Activated CD4-positive, alpha-beta memory T cell treated with anti-CD3 and anti-CD28 coated beads for 36 hours (primary cell): ENCODE measurements at regions of chr3 and their contacts with region 1.

Region 1: DNA sequence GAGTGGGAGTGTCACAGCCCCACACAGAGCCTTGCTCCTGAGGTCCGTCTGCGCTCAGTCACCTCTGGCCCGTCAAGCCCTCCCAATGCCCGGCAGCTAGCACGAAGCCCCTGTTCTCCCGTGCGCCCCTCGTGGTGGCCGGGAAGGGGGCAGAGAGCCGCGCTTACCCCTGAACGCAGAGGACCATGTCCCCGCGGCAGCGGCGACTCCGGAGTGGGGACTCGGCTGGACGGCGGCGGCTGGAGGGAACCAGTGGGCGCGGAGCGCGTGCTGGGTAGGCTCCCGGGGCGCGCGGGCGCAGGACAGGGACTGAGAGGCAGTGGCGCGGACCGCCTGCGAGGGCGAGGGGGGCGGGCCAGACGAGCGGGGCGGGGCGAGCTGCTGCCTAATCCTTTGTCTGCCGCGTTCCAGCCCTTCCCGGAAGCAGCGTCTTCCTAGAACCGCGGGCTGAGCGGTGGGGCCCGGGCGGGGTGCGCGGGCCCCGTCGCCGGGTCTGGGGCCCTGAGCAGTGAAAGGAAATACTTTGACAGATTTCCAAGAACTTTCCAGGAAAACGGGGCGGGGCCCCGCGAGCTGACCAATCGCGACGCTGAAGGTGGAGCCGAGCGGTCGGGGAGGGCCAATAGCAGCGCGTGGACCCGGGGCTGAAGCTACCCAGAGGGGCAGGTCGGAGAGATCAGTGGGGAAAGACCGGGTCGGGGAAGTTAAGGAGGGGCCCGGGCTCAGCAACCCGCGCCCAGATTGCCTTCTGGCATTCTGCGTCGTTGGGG is at the start of gene CISH:
- DNase-seq: peak; percentile 99
- H3K4me3 Mint-ChIP-seq: peak within 1 kb of the TSS; percentile 98
- H3K27ac Mint-ChIP-seq: peak within 1 kb of the TSS; percentile 100
- H3K4me1 Mint-ChIP-seq: peaks cover 39% of the 10 kb centered on the region
- H3K27me3 Mint-ChIP-seq: peaks cover 6% of the 10 kb centered on the region
- total RNA-seq, gene CISH: 319 TPM

Region 2: GRCh38 chr3:50436114-50436674 is 175.5 kb before region 1 on chr3:
- CTCF ChIA-PET with region 1: interaction called, 5 read pairs
- POLR2A ChIA-PET with region 1: no interaction called
- intact Hi-C with region 1: loop called (anchors 2 kb)
- DNase-seq: peak; percentile 85
- H3K4me3 Mint-ChIP-seq: no peak overlapping the region
- H3K27ac Mint-ChIP-seq: no peak overlapping the region
- H3K4me1 Mint-ChIP-seq: no peaks in the 10 kb centered on the region
- H3K27me3 Mint-ChIP-seq: peaks cover 3% of the 10 kb centered on the region

Region 3: GRCh38 chr3:50487181-50487580 is 124.5 kb before region 1 on chr3:
- CTCF ChIA-PET with region 1: no interaction called
- POLR2A ChIA-PET with region 1: no interaction called
- intact Hi-C with region 1: no loop called
- DNase-seq: no peak
- H3K4me3 Mint-ChIP-seq: no peak overlapping the region
- H3K27ac Mint-ChIP-seq: no peak overlapping the region
- H3K4me1 Mint-ChIP-seq: peaks cover 8% of the 10 kb centered on the region
- H3K27me3 Mint-ChIP-seq: no peaks in the 10 kb centered on the region

Region 4: DNA sequence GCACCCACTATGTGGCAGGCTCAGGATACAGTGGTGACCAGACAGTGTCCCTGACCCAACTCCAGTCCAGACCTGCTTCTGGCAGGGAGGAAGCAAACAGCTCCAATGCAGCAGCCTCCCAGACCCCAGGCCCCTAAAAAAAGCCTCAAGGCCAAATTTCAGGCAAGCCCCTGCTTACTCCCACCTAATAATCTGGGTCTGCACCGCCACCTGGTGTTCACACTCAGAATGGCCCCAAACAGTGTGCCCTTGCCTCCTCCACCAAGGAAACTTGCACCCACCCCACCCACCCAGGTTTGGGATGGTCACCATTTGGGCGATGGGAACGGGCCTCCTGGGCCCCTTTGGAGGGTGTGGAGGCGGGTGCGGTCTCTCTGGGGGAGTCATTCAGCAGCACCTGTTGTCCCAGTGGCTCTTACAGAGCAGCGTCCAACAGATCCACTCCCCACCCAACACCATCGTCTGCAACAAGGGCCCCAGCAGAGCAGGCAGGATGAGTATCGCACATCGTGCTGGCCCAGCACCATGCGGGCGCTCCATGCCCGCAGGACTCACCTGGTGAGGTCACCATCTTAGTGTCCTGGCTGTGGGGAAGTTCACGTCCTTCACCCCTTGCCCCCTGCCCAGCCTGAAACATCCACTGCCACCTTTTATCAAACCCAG is 61.4 kb before region 1 on chr3:
- CTCF ChIA-PET with region 1: interaction called, 17 read pairs
- POLR2A ChIA-PET with region 1: no interaction called
- intact Hi-C with region 1: no loop called
- DNase-seq: peak; percentile 79
- H3K4me3 Mint-ChIP-seq: no peak overlapping the region
- H3K27ac Mint-ChIP-seq: no peak overlapping the region
- H3K4me1 Mint-ChIP-seq: no peaks in the 10 kb centered on the region
- H3K27me3 Mint-ChIP-seq: no peaks in the 10 kb centered on the region

Region 5: DNA sequence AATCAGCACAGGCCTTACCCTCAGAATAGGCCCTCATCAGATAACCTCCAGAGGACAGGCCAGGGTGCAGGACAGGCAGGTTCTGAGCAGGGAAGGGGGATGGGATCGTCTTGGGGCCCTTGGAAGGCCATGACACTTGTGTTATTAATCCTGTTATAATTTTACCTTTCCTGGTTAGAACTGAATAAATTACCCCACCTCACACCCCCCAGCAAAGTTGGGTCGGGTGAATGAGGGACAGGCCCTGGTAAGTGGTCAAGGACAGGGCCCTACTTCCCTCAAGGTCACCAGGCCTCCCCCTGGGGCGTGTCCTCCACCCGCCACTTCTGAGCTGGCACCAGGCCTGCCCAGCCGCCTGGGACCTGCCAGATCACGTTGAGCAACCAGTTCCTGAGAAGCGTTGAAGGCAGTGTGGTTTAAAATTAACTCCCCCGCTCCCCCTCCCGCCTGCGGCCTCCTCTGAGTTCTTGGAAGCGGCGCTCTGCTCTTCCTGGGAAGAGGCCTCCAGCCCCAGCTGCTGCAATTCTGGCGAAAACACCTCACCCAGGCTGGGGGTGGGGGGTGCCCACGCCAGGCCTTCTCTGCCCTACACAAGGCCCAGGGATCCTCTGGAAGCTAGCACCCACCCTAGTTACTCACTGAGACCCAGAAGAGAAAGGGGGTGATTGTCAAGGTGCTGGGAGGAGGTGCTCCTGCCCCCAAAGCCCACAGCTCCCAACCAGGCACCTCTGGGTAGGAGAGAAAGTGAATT is 10.6 kb before region 1 on chr3:
- CTCF ChIA-PET with region 1: interaction called, 163 read pairs
- POLR2A ChIA-PET with region 1: interaction called, 283 read pairs
- intact Hi-C with region 1: loop called (anchors 1 kb)
- DNase-seq: peak; percentile 98
- H3K4me3 Mint-ChIP-seq: peak overlapping the region; percentile 98
- H3K27ac Mint-ChIP-seq: peak overlapping the region; percentile 100
- H3K4me1 Mint-ChIP-seq: peaks cover 81% of the 10 kb centered on the region
- H3K27me3 Mint-ChIP-seq: no peaks in the 10 kb centered on the region

Region 6: GRCh38 chr3:50666837-50667236 is 55.2 kb after region 1 on chr3:
- CTCF ChIA-PET with region 1: interaction called, 10 read pairs
- POLR2A ChIA-PET with region 1: no interaction called
- intact Hi-C with region 1: no loop called
- DNase-seq: no peak
- H3K4me3 Mint-ChIP-seq: no peak overlapping the region
- H3K27ac Mint-ChIP-seq: no peak overlapping the region
- H3K4me1 Mint-ChIP-seq: peaks cover 12% of the 10 kb centered on the region
- H3K27me3 Mint-ChIP-seq: no peaks in the 10 kb centered on the region

Region 7: GRCh38 chr3:51384726-51385473 is 773.3 kb after region 1 on chr3 and contains the start of gene MANF:
- CTCF ChIA-PET with region 1: interaction called, 19 read pairs
- POLR2A ChIA-PET with region 1: interaction called, 4 read pairs
- intact Hi-C with region 1: loop called (anchors 2 kb)
- DNase-seq: peak; percentile 99
- H3K4me3 Mint-ChIP-seq: peak within 1 kb of the TSS; percentile 93
- H3K27ac Mint-ChIP-seq: peak within 1 kb of the TSS; percentile 98
- H3K4me1 Mint-ChIP-seq: peaks cover 50% of the 10 kb centered on the region
- H3K27me3 Mint-ChIP-seq: no peaks in the 10 kb centered on the region
- total RNA-seq, gene MANF: 151 to 162 TPM